ENCODE measurements at regions of chr20 and their contacts with region 1.

Region 1: DNA sequence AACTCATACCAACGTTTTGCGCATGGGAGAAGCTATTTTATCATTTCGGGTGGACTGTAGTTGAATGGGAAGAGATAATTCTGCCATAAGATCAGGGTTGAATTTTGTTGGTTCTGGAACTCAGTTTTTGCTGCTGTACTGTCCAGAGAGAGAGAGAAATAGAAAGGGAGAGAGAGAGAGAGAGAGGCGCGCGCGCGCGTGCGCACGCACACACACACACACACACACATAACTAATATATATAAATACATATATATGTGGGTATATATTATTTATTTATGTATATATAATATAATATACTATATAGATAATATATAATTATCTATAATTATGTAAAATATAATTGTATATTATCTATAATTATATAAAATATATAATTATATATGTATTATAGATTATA is 21.9 kb downstream of the ATRN start:
- DNase-seq: no peak
- H3K4me3 ChIP-seq: no peak overlapping the region
- H3K27ac ChIP-seq: no peak overlapping the region
- H3K4me1 ChIP-seq: no peaks in the 10 kb centered on the region
- H3K27me3 ChIP-seq: no peaks in the 10 kb centered on the region
- CTCF ChIP-seq: no peak
- EP300 ChIP-seq: no peak
- POLR2A ChIP-seq: no peak

Region 2: GRCh38 chr20:3515379-3516170 is 22.9 kb after region 1 on chr20:
- intact Hi-C with region 1: loop called in 1 of 4 experiments (anchors 2 kb)
- DNase-seq: no peak
- H3K4me3 ChIP-seq: no peak overlapping the region
- H3K27ac ChIP-seq: no peak overlapping the region
- H3K4me1 ChIP-seq: peaks cover 2% of the 10 kb centered on the region
- H3K27me3 ChIP-seq: no peaks in the 10 kb centered on the region
- CTCF ChIP-seq: no peak
- EP300 ChIP-seq: no peak
- POLR2A ChIP-seq: no peak

Region 3: GRCh38 chr20:3919352-3919751 is 426.7 kb after region 1 on chr20:
- intact Hi-C with region 1: no loop called
- DNase-seq: no peak
- H3K4me3 ChIP-seq: no peak overlapping the region
- H3K27ac ChIP-seq: no peak overlapping the region
- H3K4me1 ChIP-seq: no peaks in the 10 kb centered on the region
- H3K27me3 ChIP-seq: no peaks in the 10 kb centered on the region
- CTCF ChIP-seq: no peak
- EP300 ChIP-seq: no peak
- POLR2A ChIP-seq: no peak